Activated CD8-positive, alpha-beta T cell treated with anti-CD3 and anti-CD28 coated beads, Interleukin-2, amount 10 ng/mL, durations not matched to agents 7 days and 5 days (primary cell): ENCODE measurements at regions of chr9 and their contacts with region 1.

Region 1: DNA sequence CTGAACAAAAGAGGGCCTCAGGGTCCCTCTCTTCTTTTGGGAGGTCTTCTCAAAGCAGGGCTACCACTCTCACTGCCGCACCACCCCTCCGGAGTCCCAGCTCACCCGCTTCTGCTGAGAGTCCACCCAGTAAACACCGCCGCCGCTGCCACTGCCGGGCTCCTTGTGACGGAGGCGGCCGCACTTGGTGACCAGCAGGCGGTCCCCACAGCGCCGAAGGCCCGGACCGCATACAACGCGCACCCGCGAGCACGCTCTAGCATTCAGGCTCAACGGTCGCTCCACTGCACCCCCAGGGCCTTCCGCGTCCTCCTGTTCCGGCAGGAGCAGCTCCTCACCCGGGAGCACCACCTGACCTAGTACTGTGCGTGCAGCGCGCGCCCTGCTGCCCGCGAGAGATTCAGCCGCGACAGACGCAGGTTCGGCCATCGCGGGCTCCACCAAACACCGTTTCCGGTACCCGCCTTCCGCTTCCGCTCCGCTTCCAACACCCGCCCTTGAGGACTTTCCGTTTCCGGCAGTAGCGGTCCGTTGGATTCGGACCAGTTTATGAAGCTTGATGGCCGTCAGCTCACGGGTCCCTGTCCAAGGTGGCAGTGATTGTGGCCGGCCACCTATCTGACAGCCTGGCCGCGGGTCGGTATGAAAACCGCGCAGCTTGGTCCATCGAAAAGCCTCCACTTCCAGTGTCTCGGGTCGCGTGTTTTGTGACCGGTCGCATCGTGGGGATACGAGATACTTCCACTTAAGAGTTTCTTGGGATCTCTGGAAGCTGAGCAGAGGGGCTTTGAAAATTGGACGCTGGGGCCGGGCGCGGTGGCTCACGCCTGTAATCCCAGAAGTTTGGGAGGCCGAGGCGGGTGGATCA is at the start of gene EXOSC3:
- DNase-seq: peak; percentile 93
- ATAC-seq: peak; percentile 95
- H3K4me3 Mint-ChIP-seq: peak within 1 kb of the TSS; percentile 98
- H3K27ac Mint-ChIP-seq: peak within 1 kb of the TSS; percentile 98
- H3K4me1 Mint-ChIP-seq: peaks cover 33% of the 10 kb centered on the region
- H3K27me3 Mint-ChIP-seq: no peaks in the 10 kb centered on the region
- total RNA-seq, gene EXOSC3: 86.0 to 88.4 TPM

Region 2: GRCh38 chr9:37746848-37747753 is 37.7 kb before region 1 on chr9:
- CTCF ChIA-PET with region 1: interaction called, 10 read pairs
- POLR2A ChIA-PET with region 1: interaction called, 8 read pairs
- DNase-seq: peak; percentile 72
- ATAC-seq: peak; percentile 88
- H3K4me3 Mint-ChIP-seq: no peak overlapping the region
- H3K27ac Mint-ChIP-seq: no peak overlapping the region
- H3K4me1 Mint-ChIP-seq: no peaks in the 10 kb centered on the region
- H3K27me3 Mint-ChIP-seq: no peaks in the 10 kb centered on the region

Region 3: GRCh38 chr9:37800631-37801286 is 15.9 kb after region 1 on chr9 and contains the start of gene DCAF10:
- CTCF ChIA-PET with region 1: interaction called, 7 read pairs
- POLR2A ChIA-PET with region 1: interaction called, 51 read pairs
- DNase-seq: peak; percentile 89
- ATAC-seq: peak; percentile 82
- H3K4me3 Mint-ChIP-seq: peak within 1 kb of the TSS; percentile 90
- H3K27ac Mint-ChIP-seq: peak within 1 kb of the TSS; percentile 88
- H3K4me1 Mint-ChIP-seq: peaks cover 40% of the 10 kb centered on the region
- H3K27me3 Mint-ChIP-seq: no peaks in the 10 kb centered on the region
- total RNA-seq, gene DCAF10: 19.7 to 21.2 TPM

Region 4: GRCh38 chr9:37889536-37889935 is 104.7 kb after region 1 on chr9:
- CTCF ChIA-PET with region 1: no interaction called
- POLR2A ChIA-PET with region 1: no interaction called
- DNase-seq: no peak
- ATAC-seq: no peak
- H3K4me3 Mint-ChIP-seq: no peak overlapping the region
- H3K27ac Mint-ChIP-seq: no peak overlapping the region
- H3K4me1 Mint-ChIP-seq: peaks cover 6% of the 10 kb centered on the region
- H3K27me3 Mint-ChIP-seq: no peaks in the 10 kb centered on the region